Heart right ventricle (tissue), 16 donors: ENCODE measurements at regions of chr14 and their contacts with region 1.

Region 1: DNA sequence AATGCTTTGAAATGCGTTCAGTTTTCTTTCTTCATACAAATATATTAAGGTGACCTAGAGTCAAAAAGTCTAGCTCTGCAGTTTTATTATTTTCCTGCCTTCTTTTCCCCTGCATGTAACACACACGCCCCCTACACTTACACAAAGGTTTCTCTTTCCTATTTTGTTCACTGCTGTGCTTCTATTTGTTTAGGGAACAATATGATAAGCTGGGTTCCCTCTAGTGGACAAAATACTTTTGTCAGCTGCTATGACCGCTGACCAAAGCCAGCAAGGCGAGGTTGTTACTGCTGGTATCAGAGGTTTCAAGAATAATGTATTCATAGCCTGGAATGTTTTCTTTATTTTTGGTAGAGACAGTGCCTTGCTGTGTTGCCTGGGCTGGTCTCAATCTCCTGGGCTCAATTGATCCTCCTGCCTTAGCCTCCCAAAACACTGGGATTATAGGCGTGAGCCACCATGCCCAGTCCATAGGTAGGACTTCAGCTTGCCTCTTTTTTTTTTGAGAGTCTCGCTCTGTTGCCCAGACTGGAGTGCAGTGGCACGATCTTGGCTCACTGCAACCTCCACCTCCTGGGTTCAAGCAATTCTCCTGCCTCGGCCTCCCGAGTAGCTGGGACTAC is 33.4 kb downstream of the FNTB start:
- DNase-seq: peak in 1 of 2 donors; percentile 33
- ATAC-seq: peak; percentile 65 to 95 (median 90)
- H3K4me3 ChIP-seq: peak overlapping the region in 1 of 10 donors; percentile 1
- H3K27ac ChIP-seq: peak overlapping the region in 2 of 10 donors; percentile 4 to 16
- H3K4me1 ChIP-seq: peaks cover 0 to 15% (median 8%) of the 10 kb centered on the region in 9 donors
- H3K27me3 ChIP-seq: no peaks in the 10 kb centered on the region
- CTCF ChIP-seq: peak; percentile 42 to 80 (median 69)

Region 2: DNA sequence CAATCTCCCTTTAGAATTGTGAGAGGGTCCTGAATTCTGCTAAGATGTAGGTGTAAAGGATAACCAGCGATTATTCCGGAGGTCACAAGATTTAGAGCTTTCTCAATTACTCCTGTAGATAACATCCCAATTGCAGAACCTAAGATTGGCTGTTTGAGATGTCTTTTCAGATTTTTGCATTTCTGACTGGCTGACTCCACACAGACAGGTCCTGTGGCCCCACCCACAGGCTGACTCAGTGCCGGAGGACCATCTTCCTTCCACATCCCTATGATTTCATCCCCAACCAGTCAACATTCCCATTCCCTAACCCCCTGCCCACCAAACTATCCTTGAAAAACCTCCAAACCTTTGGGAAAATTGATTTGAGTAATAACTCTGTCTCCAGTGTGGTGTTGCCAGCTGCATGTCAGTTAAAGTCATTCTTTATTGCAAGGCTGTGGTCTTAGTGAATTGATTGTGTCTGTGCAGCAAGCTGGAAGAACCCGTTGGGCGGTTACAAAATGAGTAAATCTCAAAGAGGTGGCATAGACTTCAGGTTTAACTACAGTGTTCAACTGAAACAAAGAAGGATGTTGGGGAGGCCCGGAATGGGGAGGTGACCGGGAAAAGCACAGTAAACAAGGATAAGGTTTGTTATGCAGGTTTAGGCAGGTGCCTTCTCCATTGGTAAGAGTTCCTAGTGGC is 22.8 kb before region 1 on chr14:
- intact Hi-C with region 1: loop called in 1 of 10 experiments (anchors 1 kb)
- DNase-seq: no peak
- ATAC-seq: no peak
- H3K4me3 ChIP-seq: no peak overlapping the region
- H3K27ac ChIP-seq: no peak overlapping the region
- H3K4me1 ChIP-seq: peaks cover 0 to 28% (median 6%) of the 10 kb centered on the region in 9 donors
- H3K27me3 ChIP-seq: no peaks in the 10 kb centered on the region
- CTCF ChIP-seq: no peak